PC-9 (cell line): ENCODE measurements at regions of chr17 and their contacts with region 1.

Region 1: GRCh38 chr17:58989629-58990028 is 117.1 kb downstream of the TRIM37 start:
- DNase-seq: no peak
- H3K4me3 ChIP-seq: no peak overlapping the region
- H3K27ac ChIP-seq: no peak overlapping the region
- H3K4me1 ChIP-seq: 0 out of 2 replicates have a peak, but pooled peaks cover 13% of the 10 kb centered on the region
- H3K27me3 ChIP-seq: no peaks in the 10 kb centered on the region
- CTCF ChIP-seq: no peak

Region 2: DNA sequence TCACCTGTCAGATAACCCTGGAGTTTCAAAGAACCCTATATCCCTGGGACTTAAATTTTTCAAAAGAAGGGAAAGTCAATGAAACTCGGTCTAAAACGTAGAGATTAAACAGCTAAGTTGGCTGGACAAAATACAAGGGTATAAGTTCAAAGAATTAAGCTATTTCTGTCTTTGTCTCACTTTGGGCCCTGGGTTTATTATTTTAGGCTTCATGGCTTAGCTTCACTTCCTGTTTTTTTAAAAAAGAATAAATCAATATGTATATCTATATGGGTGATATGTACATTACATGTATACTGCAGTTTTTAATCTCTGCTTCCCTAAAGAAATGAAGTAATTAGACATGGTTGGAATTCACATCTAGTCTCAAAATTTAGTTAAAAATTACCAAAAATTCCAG is 15.3 kb before region 1 on chr17:
- CTCF ChIA-PET with region 1: no interaction called
- POLR2A ChIA-PET with region 1: interaction called, 23 read pairs
- intact Hi-C with region 1: no loop called
- DNase-seq: no peak
- H3K4me3 ChIP-seq: no peak overlapping the region
- H3K27ac ChIP-seq: no peak overlapping the region
- H3K4me1 ChIP-seq: no peaks in the 10 kb centered on the region
- H3K27me3 ChIP-seq: no peaks in the 10 kb centered on the region
- CTCF ChIP-seq: no peak